ENCODE measurements at regions of chr2 and their contacts with region 1.

Region 1: DNA sequence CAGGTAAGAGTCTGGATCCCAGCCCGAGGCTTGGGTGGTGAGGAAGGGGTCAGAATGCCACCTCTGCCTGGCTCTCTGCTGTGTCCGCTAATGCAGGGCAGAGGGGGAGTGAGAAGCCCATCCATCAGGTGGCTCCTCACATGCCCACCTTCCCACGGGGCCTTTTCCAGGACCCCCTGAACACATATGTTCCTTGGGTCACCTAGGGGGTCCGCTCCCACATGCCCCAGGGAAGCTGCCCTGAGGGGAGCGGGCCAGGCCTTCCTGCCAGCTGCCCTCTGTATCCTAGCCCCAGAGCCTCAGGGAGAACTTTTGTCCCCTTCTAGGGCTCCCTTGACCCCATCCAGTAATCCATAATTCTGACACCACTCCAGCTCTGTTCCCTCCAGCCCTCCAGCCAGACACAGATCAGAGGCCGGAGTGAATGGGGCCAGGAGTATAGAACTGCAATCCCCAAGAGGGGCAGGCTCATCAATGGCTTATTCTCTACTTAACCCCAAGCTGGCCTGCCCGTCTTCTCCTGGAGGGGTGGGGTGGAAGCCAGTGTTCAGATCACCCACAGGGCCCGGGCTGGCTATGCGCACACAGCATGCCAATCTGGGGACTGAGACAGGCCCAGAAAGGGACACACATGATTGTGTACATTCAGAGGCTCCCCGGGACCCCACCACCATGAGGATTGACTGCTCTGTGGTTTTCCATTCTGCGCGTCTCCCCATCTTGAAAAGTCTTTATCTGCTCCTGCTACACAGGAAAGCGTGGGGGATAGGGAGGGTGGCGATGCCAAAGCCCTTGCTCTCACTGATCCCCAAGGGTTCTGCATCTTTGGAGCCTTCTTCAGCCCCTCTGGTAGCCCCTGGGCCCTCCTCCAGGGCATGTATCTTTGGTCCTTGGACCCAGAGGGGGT is 1.1 kb downstream of the EMILIN1 start:
- DNase-seq: no peak
- ATAC-seq: no peak
- H3K4me3 ChIP-seq: no peak overlapping the region
- H3K4me3 Mint-ChIP-seq: no peak overlapping the region
- H3K27ac ChIP-seq: no peak overlapping the region
- H3K27ac Mint-ChIP-seq: no peak overlapping the region
- H3K4me1 ChIP-seq: peaks cover 37% of the 10 kb centered on the region
- H3K4me1 Mint-ChIP-seq: peaks cover 34% of the 10 kb centered on the region
- H3K27me3 ChIP-seq: no peaks in the 10 kb centered on the region
- H3K27me3 Mint-ChIP-seq: no peaks in the 10 kb centered on the region
- CTCF ChIP-seq: no peak

Region 2: GRCh38 chr2:26922405-26923188 is 156.9 kb before region 1 on chr2:
- CTCF ChIA-PET with region 1: no interaction called
- POLR2A ChIA-PET with region 1: no interaction called
- intact Hi-C with region 1: no loop called
- DNase-seq: peak in 8 of 9 experiments; percentile 13 to 61 (median 38)
- ATAC-seq: peak; percentile 67
- H3K4me3 ChIP-seq: no peak overlapping the region
- H3K4me3 Mint-ChIP-seq: no peak overlapping the region
- H3K27ac ChIP-seq: no peak overlapping the region
- H3K27ac Mint-ChIP-seq: no peak overlapping the region
- H3K4me1 ChIP-seq: no peaks in the 10 kb centered on the region
- H3K4me1 Mint-ChIP-seq: peaks cover 6% of the 10 kb centered on the region
- H3K27me3 ChIP-seq: no peaks in the 10 kb centered on the region
- H3K27me3 Mint-ChIP-seq: peaks cover 28% of the 10 kb centered on the region
- CTCF ChIP-seq: peak; percentile 68

Region 3: DNA sequence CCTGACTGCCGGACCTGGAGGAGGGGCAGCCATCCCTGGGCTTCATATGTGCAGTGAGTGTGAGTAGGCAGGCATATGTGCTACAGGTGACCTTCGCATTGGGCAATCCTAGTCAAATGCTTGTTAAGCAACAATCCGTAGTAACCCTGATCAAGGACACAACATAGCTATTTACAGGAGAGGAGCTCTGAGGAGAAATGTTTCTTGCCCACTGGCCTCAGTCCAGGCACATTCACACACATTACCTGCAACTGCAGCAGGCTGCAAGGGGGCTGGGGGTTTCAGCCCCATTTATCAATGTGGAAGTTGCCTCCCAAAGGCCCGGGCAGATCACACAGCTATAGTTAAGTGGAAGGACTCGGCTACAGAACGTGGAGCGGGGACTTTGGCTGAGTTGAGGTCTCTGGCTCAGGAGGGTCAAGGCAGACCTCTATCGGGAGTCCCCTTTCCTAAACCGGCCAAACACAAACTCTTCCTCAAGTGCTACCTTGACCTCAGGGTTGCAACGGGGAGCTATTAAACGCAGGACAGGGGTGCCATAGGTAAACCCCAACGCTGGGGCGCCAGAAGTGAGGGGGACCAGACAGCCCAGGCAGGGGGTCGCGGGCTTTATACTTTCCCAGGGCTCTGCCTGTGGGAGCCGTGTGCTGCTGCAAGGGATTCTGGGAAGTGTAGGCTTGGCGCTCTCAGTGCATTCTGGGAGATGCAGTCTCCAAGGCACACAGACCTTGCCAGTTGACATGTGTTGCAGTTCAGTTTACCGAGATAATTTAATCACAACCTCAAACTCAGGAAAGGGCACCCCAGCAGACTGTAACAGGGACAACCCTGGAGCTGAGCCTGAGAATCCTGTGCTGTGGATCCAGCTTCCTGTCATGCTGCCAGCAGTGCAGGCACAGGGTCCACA is 16.5 kb after region 1 on chr2:
- CTCF ChIA-PET with region 1: no interaction called
- POLR2A ChIA-PET with region 1: interaction called, 3 read pairs
- intact Hi-C with region 1: loop called in 1 of 2 experiments (anchors 1 kb)
- DNase-seq: peak in 5 of 9 experiments; percentile 32 to 69 (median 57)
- ATAC-seq: peak; percentile 88
- H3K4me3 ChIP-seq: peak overlapping the region; percentile 21 to 42
- H3K4me3 Mint-ChIP-seq: peak overlapping the region; percentile 61
- H3K27ac ChIP-seq: no peak overlapping the region
- H3K27ac Mint-ChIP-seq: no peak overlapping the region
- H3K4me1 ChIP-seq: peaks cover 9% of the 10 kb centered on the region
- H3K4me1 Mint-ChIP-seq: peaks cover 11% of the 10 kb centered on the region
- H3K27me3 ChIP-seq: no peaks in the 10 kb centered on the region
- H3K27me3 Mint-ChIP-seq: no peaks in the 10 kb centered on the region
- CTCF ChIP-seq: no peak